SK-N-SH (cell line): ENCODE measurements at regions of chr1 and their contacts with region 1.

Region 1: GRCh38 chr1:84936116-84936810 is 43.3 kb upstream of the LPAR3 start:
- DNase-seq: peak; percentile 62
- H3K4me3 ChIP-seq: peak overlapping the region in 1 of 2 experiments; percentile 44; a peak in 1 of 4 replicates
- H3K27ac ChIP-seq: no peak overlapping the region; a peak in 1 of 4 replicates
- H3K4me1 ChIP-seq: no peaks in the 10 kb centered on the region; a peak in 1 of 4 replicates
- H3K27me3 ChIP-seq: peaks cover 11% of the 10 kb centered on the region; the same call in 1 of the 2 replicates
- CTCF ChIP-seq: peak; percentile 94
- EP300 ChIP-seq: no peak
- RAD21 ChIP-seq: peak; percentile 97

Region 2: DNA sequence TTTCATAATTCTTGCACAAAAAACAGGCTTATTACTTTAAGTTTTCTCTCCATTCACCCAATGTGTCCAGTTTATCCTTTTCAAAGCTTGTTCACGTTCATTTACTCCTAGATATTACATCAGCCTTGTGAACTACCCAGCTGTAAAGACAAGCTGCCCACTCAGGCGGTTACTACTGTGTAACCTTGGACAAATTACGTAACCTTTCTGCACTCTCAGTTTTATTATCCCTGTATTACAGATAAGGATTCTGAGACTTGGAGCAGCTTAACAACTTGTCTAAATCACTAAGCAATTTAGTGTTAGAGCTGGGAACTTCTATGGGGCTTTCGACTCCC is 22.7 kb before region 1 on chr1:
- CTCF ChIA-PET with region 1: interaction called, 17 read pairs
- POLR2A ChIA-PET with region 1: no interaction called
- DNase-seq: no peak
- H3K4me3 ChIP-seq: no peak overlapping the region
- H3K27ac ChIP-seq: no peak overlapping the region
- H3K4me1 ChIP-seq: no peaks in the 10 kb centered on the region; a peak in 1 of 4 replicates
- H3K27me3 ChIP-seq: no peaks in the 10 kb centered on the region; the same call in 1 of the 2 replicates
- CTCF ChIP-seq: no peak
- EP300 ChIP-seq: no peak
- RAD21 ChIP-seq: no peak

Region 3: GRCh38 chr1:84919461-84919970 is 16.7 kb before region 1 on chr1:
- CTCF ChIA-PET with region 1: interaction called, 18 read pairs
- POLR2A ChIA-PET with region 1: no interaction called
- DNase-seq: no peak
- H3K4me3 ChIP-seq: no peak overlapping the region
- H3K27ac ChIP-seq: no peak overlapping the region
- H3K4me1 ChIP-seq: peaks cover 0 to 6% of the 10 kb centered on the region in 2 experiments; a peak in 1 of 4 replicates
- H3K27me3 ChIP-seq: no peaks in the 10 kb centered on the region; the same call in 1 of the 2 replicates
- CTCF ChIP-seq: no peak
- EP300 ChIP-seq: no peak
- RAD21 ChIP-seq: no peak

Region 4: GRCh38 chr1:85042413-85042812 is 106.2 kb after region 1 on chr1:
- CTCF ChIA-PET with region 1: no interaction called
- POLR2A ChIA-PET with region 1: no interaction called
- DNase-seq: no peak
- H3K4me3 ChIP-seq: no peak overlapping the region
- H3K27ac ChIP-seq: no peak overlapping the region
- H3K4me1 ChIP-seq: no peaks in the 10 kb centered on the region
- H3K27me3 ChIP-seq: peaks cover 39% of the 10 kb centered on the region
- CTCF ChIP-seq: no peak
- EP300 ChIP-seq: no peak
- RAD21 ChIP-seq: no peak